Activated CD4-positive, alpha-beta T cell treated with anti-CD3 and anti-CD28 coated beads for 36 hours (primary cell): ENCODE measurements at regions of chr1 and their contacts with region 1.

Region 1: GRCh38 chr1:213015099-213016050 is at the start of gene ANGEL2:
- DNase-seq: peak; percentile 97
- ATAC-seq: peak; percentile 99
- H3K4me3 Mint-ChIP-seq: peak within 1 kb of the TSS; percentile 100
- H3K27ac Mint-ChIP-seq: peak within 1 kb of the TSS; percentile 100
- H3K4me1 Mint-ChIP-seq: peaks cover 30% of the 10 kb centered on the region
- H3K27me3 Mint-ChIP-seq: no peaks in the 10 kb centered on the region
- total RNA-seq, gene ANGEL2: 41.3 to 51.5 TPM

Region 2: DNA sequence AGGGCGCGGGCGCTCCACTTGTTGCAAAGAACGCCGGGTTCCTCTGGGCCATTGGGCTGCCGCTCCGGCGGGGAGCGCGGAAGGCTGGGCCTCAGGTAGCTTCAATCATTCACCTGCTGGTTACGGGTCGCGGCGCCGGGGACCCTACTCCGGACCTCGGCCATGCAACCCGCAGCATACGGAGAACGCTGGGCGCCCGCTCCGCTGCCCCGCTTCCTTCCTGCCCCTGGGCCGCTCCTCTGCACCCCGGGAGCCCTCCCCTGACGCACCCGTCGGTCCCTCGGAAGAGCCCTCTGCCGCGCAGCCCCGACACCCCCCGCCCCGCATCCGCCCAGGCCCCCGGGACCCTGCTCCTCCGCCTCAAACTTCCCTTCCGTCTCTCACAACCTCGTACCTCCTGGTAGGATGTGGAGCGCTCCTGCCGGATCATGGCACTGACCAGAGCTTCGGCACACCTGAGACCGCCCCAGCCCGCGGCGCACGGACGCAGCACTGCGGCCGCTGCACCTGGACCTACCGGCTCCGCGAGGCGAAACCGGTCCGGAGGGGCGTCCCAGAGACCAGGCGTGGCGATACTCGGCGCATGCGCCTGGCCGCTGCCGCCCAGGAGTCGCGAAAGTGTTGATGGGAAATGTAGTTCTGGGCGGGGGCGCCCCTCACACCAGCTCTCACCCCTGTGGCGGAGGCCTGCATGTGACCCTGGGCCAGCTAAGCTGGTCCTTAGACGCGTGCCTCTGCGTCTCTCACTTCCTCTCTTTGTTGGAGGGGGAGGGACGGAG is 600.9 kb before region 1 on chr1 and contains the start of gene PACC1:
- CTCF ChIA-PET with region 1: no interaction called
- POLR2A ChIA-PET with region 1: no interaction called
- intact Hi-C with region 1: loop called in 1 of 2 experiments (anchors 1 kb)
- DNase-seq: peak; percentile 93
- ATAC-seq: peak; percentile 98
- H3K4me3 Mint-ChIP-seq: peak within 1 kb of the TSS; percentile 93
- H3K27ac Mint-ChIP-seq: peak within 1 kb of the TSS; percentile 92
- H3K4me1 Mint-ChIP-seq: peaks cover 22% of the 10 kb centered on the region
- H3K27me3 Mint-ChIP-seq: no peaks in the 10 kb centered on the region
- total RNA-seq, gene PACC1: 9.2 to 13.8 TPM

Region 3: DNA sequence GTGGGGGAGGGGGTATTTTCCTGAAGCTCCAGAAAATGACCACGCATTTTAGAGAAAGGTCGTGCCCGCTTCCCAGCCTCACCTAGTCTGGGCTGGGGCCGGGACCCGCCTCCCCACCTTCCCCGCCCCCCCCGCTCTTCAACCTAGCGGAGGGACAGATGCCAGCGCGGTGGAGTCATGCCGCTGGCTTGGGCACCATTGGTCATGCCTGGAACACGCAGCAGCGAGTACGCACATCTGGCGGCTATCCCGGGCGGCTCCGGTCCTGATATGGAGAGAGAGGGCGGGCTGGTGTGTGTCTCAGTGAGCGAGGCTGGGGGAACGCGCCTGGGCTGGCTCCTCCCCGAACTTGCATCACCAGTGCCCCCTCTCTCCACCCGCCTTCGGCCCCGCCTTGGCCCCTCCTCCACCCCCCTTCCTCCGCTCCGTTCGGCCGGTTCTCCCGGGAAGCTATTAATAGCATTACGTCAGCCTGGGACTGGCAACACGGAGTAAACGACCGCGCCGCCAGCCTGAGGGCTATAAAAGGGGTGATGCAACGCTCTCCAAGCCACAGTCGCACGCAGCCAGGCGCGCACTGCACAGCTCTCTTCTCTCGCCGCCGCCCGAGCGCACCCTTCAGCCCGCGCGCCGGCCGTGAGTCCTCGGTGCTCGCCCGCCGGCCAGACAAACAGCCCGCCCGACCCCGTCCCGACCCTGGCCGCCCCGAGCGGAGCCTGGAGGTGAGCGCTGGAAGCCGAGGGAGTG is 407.0 kb before region 1 on chr1 and contains the start of gene ATF3:
- CTCF ChIA-PET with region 1: no interaction called
- POLR2A ChIA-PET with region 1: no interaction called
- intact Hi-C with region 1: loop called in 1 of 2 experiments (anchors 2 kb)
- DNase-seq: peak; percentile 97
- ATAC-seq: peak; percentile 89
- H3K4me3 Mint-ChIP-seq: peak within 1 kb of the TSS; percentile 91
- H3K27ac Mint-ChIP-seq: peak within 1 kb of the TSS; percentile 96
- H3K4me1 Mint-ChIP-seq: peaks cover 56% of the 10 kb centered on the region
- H3K27me3 Mint-ChIP-seq: peaks cover 45% of the 10 kb centered on the region
- total RNA-seq, gene ATF3: 40.3 to 44.9 TPM

Region 4: GRCh38 chr1:212990276-212990675 is 25.1 kb before region 1 on chr1:
- CTCF ChIA-PET with region 1: interaction called, 25 read pairs
- POLR2A ChIA-PET with region 1: no interaction called
- intact Hi-C with region 1: no loop called
- DNase-seq: no peak
- ATAC-seq: no peak
- H3K4me3 Mint-ChIP-seq: no peak overlapping the region
- H3K27ac Mint-ChIP-seq: no peak overlapping the region
- H3K4me1 Mint-ChIP-seq: peaks cover 8% of the 10 kb centered on the region
- H3K27me3 Mint-ChIP-seq: no peaks in the 10 kb centered on the region

Region 5: GRCh38 chr1:213051127-213051880 is 35.9 kb after region 1 on chr1 and contains the start of gene RPS6KC1:
- CTCF ChIA-PET with region 1: interaction called, 4 read pairs
- POLR2A ChIA-PET with region 1: no interaction called
- intact Hi-C with region 1: loop called (anchors 1 kb)
- DNase-seq: peak; percentile 92
- ATAC-seq: peak; percentile 97
- H3K4me3 Mint-ChIP-seq: peak within 1 kb of the TSS; percentile 82
- H3K27ac Mint-ChIP-seq: peak within 1 kb of the TSS; percentile 93
- H3K4me1 Mint-ChIP-seq: peaks cover 27% of the 10 kb centered on the region
- H3K27me3 Mint-ChIP-seq: peaks cover 9% of the 10 kb centered on the region
- total RNA-seq, gene RPS6KC1: 4.9 to 5.7 TPM